ENCODE measurements at regions of chr9 and their contacts with region 1.

Region 1: GRCh38 chr9:109903515-109904138 is 123.6 kb downstream of the PALM2AKAP2 start:
- DNase-seq: no peak
- H3K4me3 ChIP-seq: no peak overlapping the region
- H3K27me3 ChIP-seq: no peaks in the 10 kb centered on the region
- CTCF ChIP-seq: peak; percentile 77

Region 2: GRCh38 chr9:109828254-109828653 is 75.4 kb before region 1 on chr9:
- CTCF ChIA-PET with region 1: no interaction called
- POLR2A ChIA-PET with region 1: no interaction called
- DNase-seq: no peak
- H3K4me3 ChIP-seq: no peak overlapping the region
- H3K27me3 ChIP-seq: no peaks in the 10 kb centered on the region
- CTCF ChIP-seq: no peak

Region 3: GRCh38 chr9:109887079-109887478 is 16.5 kb before region 1 on chr9:
- CTCF ChIA-PET with region 1: interaction called, 33 read pairs
- POLR2A ChIA-PET with region 1: no interaction called
- DNase-seq: no peak
- H3K4me3 ChIP-seq: no peak overlapping the region
- H3K27me3 ChIP-seq: no peaks in the 10 kb centered on the region
- CTCF ChIP-seq: no peak

Region 4: DNA sequence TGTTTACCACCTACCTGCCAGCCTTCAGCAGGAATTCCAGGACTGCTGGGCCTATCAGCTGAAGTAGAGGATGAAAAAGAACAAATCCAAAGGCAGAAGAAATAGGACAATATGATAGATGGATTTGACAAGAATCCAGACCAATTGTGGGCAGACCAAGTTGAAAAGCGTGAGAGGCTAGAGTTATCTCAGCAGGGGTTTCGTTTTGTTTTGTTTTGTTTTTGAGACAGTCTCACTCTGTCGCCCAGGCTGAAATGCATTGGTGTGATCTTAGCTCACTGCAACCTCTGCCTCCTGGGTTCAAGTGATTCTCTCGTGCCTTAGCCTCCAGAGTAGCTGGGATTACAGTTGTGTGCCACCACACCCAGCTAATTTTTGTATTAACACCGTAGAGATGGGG is 10.4 kb before region 1 on chr9:
- CTCF ChIA-PET with region 1: interaction called, 33 read pairs
- POLR2A ChIA-PET with region 1: no interaction called
- DNase-seq: no peak
- H3K4me3 ChIP-seq: no peak overlapping the region
- H3K27me3 ChIP-seq: no peaks in the 10 kb centered on the region
- CTCF ChIP-seq: no peak

Region 5: DNA sequence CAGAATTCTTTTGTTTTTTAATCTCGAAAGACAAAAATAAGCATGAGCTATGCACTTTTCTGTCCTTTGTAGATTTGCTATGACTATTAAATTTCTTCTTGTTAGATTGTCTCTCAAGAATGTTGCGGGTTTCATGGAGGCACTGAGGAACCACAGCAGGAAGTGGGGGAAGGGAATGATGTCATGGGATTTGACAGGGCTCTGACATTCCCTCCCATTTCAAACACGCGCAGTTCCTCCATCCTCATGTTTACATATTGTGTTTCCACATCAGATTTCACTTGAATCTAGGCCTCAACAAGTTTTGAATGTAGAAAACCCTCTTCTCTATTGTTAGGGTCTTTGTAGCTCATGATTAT is 31.2 kb after region 1 on chr9:
- CTCF ChIA-PET with region 1: no interaction called
- POLR2A ChIA-PET with region 1: no interaction called
- DNase-seq: no peak
- H3K4me3 ChIP-seq: no peak overlapping the region
- H3K27me3 ChIP-seq: no peaks in the 10 kb centered on the region
- CTCF ChIP-seq: no peak

Region 6: GRCh38 chr9:110152704-110153374 is 249.2 kb after region 1 on chr9:
- CTCF ChIA-PET with region 1: interaction called, 34 read pairs
- POLR2A ChIA-PET with region 1: no interaction called
- DNase-seq: no peak
- H3K4me3 ChIP-seq: no peak overlapping the region
- H3K27me3 ChIP-seq: no peaks in the 10 kb centered on the region
- CTCF ChIP-seq: peak; percentile 72

Region 7: GRCh38 chr9:110183208-110184145 is 279.9 kb after region 1 on chr9:
- CTCF ChIA-PET with region 1: interaction called, 14 read pairs
- POLR2A ChIA-PET with region 1: no interaction called
- DNase-seq: no peak
- H3K4me3 ChIP-seq: no peak overlapping the region
- H3K27me3 ChIP-seq: no peaks in the 10 kb centered on the region
- CTCF ChIP-seq: peak; percentile 73

Region 8: GRCh38 chr9:110192531-110193261 is 289.1 kb after region 1 on chr9:
- CTCF ChIA-PET with region 1: interaction called, 10 read pairs
- POLR2A ChIA-PET with region 1: no interaction called
- DNase-seq: peak; percentile 99
- H3K4me3 ChIP-seq: no peak overlapping the region
- H3K27me3 ChIP-seq: no peaks in the 10 kb centered on the region
- CTCF ChIP-seq: no peak